ENCODE measurements at regions of chr4 and their contacts with region 1.

Region 1: DNA sequence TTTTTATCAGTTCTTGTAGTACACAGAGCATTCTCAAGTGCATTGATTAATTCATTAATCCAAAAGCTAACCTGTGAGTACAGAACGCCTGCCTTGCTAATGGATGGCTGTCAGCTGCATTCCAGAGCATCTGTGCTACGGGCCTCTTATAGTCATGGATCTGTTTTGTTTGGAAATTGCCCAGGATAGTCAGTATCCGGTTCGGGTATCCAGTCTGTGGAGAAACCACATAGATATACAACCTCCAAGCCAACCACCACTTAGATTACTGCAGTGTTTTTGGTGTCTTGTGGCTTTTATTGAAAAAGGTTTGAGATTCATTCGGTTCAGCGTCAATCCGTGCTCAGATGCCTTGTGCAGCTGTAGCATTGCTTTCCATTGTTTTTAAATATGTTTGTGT is 4.0 kb downstream of the LAP3 start:
- DNase-seq: no peak
- H3K4me3 ChIP-seq: no peak overlapping the region
- H3K27ac ChIP-seq: peak overlapping the region in 3 of 5 donors; percentile 15 to 92 (median 44)
- H3K4me1 ChIP-seq: peaks cover 22 to 40% (median 32%) of the 10 kb centered on the region in 4 donors
- H3K27me3 ChIP-seq: no peaks in the 10 kb centered on the region
- CTCF ChIP-seq: no peak
- EP300 ChIP-seq: no peak
- POLR2A ChIP-seq: no peak

Region 2: GRCh38 chr4:17614416-17615299 is 33.7 kb after region 1 on chr4 and contains the start of gene MED28:
- intact Hi-C with region 1: loop called (anchors 5 kb)
- DNase-seq: peak; percentile 98 to 99
- H3K4me3 ChIP-seq: peak within 1 kb of the TSS; percentile 85 to 99 (median 94)
- H3K27ac ChIP-seq: peak within 1 kb of the TSS; percentile 87 to 92 (median 91)
- H3K4me1 ChIP-seq: peaks cover 29 to 57% (median 40%) of the 10 kb centered on the region in 4 donors
- H3K27me3 ChIP-seq: no peaks in the 10 kb centered on the region
- CTCF ChIP-seq: peak in 1 of 7 experiments; percentile 18
- EP300 ChIP-seq: no peak
- POLR2A ChIP-seq: peak in 2 of 4 donors; percentile 39 to 81
- total RNA-seq, gene MED28: 10.6 to 43.5 (median 17.9) TPM

Measured in stomach (tissue), 19 donors.